ENCODE measurements at regions of chr3 and their contacts with region 1.

Region 1: GRCh38 chr3:47475570-47476329 is at the start of gene SCAP:
- DNase-seq: peak; percentile 96
- ATAC-seq: peak; percentile 93
- H3K4me3 Mint-ChIP-seq: peak within 1 kb of the TSS; percentile 93
- H3K27ac Mint-ChIP-seq: peak within 1 kb of the TSS; percentile 87
- H3K4me1 Mint-ChIP-seq: peaks cover 31% of the 10 kb centered on the region
- H3K27me3 Mint-ChIP-seq: no peaks in the 10 kb centered on the region
- total RNA-seq, gene SCAP: 57.5 to 60.7 TPM

Region 2: DNA sequence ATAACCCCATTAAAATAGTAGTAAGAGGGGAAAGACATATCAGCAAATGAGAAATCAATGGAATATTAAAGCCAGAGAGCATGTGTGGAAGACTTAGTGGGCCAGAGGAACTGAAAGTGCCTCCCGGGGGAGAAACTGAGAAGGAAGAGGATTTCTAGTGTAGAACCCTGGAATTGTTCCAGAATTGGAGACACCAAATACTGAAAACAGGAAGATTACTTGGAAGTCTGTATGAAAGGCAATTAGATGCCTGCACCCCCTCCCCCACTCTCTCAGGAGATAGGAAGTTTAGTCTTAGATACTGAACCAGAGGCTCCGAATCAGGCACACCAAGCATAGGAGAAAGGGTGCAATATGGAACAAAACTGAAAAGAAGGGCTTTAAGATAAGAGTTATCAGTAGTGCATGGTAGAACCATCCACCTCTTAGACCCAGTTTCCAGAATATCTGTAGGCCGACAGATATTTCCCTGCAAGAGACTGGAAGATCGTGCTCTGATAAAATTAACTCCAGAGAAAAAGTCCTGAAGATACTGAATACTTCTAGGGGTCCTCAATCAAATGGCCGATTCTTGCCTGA is 160.6 kb before region 1 on chr3:
- CTCF ChIA-PET with region 1: no interaction called
- POLR2A ChIA-PET with region 1: no interaction called
- DNase-seq: no peak
- ATAC-seq: no peak
- H3K4me3 Mint-ChIP-seq: no peak overlapping the region
- H3K27ac Mint-ChIP-seq: no peak overlapping the region
- H3K4me1 Mint-ChIP-seq: peaks cover 4% of the 10 kb centered on the region
- H3K27me3 Mint-ChIP-seq: no peaks in the 10 kb centered on the region

Region 3: GRCh38 chr3:47464588-47464987 is 11.2 kb before region 1 on chr3:
- CTCF ChIA-PET with region 1: interaction called, 16 read pairs
- POLR2A ChIA-PET with region 1: no interaction called
- DNase-seq: no peak
- ATAC-seq: no peak
- H3K4me3 Mint-ChIP-seq: no peak overlapping the region
- H3K27ac Mint-ChIP-seq: no peak overlapping the region
- H3K4me1 Mint-ChIP-seq: peaks cover 13% of the 10 kb centered on the region
- H3K27me3 Mint-ChIP-seq: no peaks in the 10 kb centered on the region

Region 4: DNA sequence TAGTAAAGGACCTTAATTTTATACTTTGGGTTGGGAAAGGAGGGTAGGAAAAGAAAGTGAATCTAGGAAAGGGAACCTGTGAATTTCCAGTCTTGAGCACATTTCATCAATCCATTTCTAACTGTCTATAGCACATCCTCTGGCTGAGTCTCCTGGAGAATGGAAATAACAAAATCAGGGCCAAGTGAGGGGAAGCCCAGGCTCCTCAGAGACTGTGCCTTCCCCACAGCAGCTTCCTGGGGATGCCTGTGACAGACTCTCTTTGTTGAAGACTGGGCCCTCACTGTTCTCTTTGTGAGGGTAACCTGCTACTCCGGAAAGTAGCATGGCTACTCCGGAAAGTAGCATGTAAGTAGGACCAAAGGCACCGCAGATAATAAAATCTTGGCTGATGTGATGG is 125.5 kb after region 1 on chr3:
- CTCF ChIA-PET with region 1: no interaction called
- POLR2A ChIA-PET with region 1: no interaction called
- DNase-seq: no peak
- ATAC-seq: no peak
- H3K4me3 Mint-ChIP-seq: no peak overlapping the region
- H3K27ac Mint-ChIP-seq: no peak overlapping the region
- H3K4me1 Mint-ChIP-seq: no peaks in the 10 kb centered on the region
- H3K27me3 Mint-ChIP-seq: no peaks in the 10 kb centered on the region